ENCODE measurements at regions of chr2 and their contacts with region 1.

Region 1: DNA sequence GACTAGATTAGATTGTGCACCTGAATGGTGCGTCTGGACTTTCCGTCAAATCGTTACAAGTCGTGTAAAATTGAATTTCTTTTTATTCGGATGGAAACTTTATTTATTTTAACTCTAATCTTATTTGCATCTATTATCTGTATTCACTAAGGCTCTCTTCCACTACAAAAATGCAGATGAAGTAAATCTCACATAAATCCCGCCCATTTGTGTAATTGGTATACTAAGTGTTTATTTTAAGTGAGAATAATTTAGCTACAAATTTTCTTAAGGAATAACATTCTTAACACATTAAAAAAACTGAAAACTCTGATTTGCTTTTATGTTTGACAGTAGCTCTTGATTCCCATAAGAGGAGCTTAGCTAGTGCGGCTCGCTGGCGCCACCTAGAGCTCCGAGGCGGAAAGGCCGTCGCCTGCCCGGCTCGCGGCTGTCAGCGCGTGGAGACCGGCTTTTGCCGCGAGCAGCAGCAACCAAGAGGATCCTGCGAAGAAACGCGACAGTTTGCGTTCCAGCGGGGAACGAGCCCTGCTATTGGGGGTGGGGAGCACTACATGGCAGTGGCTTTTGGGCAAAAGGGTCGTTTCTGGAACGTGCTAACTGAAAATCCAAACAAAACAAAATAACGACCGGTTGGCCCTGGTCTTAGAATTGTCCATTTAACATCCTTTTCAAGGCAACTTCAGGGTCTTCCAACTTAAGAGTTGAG is 6.7 kb downstream of the SP9 start:
- DNase-seq: peak; percentile 93
- ATAC-seq: peak; percentile 96

Region 2: DNA sequence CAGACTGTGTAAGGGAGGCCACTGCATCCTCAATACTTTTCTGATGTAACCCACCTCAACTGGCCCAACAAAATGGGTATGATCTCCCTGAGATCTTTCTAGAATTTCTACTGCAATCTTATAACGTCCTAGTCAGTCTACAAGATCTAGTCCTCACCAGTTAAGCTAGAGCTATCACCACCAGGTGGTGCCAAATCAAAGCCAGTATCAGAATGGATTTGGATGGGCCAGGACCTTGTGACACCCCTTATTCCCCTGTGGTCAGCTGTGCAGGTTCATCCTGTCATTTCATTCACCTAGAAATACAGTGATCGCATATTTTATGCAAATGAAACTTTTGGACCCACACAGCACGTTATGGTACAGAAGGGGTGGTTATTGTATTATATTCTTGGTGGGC is 183.4 kb before region 1 on chr2:
- intact Hi-C with region 1: loop called (anchors 5 kb)
- DNase-seq: no peak
- ATAC-seq: no peak

Region 3: DNA sequence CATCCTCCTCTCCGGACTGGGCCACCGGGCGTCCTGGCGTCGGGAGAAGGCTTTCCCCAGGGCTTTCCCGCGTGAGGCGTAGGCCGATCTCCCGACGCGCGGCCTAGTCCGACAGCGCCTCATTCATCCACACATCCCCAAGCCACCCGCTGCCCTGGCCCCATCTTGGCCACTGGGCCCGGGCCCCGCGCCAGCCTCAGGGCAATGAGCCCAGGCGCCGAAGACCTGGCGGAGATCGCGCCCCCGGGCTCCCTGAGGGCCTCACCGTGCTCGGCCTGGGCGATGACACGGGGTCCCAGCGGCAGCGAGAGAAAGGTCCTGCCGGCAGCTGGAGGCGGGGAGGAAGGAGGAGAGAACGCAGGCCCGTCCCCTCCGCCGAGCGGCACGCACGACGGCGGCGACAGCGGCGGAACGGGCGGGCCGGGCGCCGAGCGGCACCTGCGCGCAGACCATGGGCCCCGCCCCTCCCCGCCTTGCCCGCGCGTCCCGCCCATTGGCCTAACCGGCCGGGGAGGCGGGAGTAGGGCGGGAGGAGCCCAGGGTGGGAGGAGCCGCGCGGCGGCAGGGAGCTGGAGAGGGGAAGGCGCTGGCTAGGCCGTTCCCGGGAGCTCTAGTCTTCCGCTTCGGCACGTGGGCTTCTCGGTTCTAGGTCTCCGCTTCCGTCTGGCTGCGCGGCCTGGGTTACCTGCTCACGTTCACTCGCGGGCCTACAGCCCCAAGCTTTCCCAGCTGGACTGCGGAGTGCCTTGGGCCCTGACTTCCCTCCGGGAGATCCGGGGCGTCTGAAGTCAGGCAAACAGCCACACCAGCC is 93.0 kb before region 1 on chr2 and contains the start of gene OLA1:
- intact Hi-C with region 1: loop called (anchors 10 kb)
- DNase-seq: peak; percentile 97
- ATAC-seq: peak; percentile 100
- total RNA-seq, gene OLA1: 71.3 TPM

Region 4: GRCh38 chr2:174487108-174487819 is 145.8 kb after region 1 on chr2:
- intact Hi-C with region 1: no loop called
- DNase-seq: peak; percentile 100
- ATAC-seq: peak; percentile 98

Measured in Right ventricle myocardium superior (tissue), 1 donor.